ENCODE measurements at regions of chr5 and their contacts with region 1.

Region 1: DNA sequence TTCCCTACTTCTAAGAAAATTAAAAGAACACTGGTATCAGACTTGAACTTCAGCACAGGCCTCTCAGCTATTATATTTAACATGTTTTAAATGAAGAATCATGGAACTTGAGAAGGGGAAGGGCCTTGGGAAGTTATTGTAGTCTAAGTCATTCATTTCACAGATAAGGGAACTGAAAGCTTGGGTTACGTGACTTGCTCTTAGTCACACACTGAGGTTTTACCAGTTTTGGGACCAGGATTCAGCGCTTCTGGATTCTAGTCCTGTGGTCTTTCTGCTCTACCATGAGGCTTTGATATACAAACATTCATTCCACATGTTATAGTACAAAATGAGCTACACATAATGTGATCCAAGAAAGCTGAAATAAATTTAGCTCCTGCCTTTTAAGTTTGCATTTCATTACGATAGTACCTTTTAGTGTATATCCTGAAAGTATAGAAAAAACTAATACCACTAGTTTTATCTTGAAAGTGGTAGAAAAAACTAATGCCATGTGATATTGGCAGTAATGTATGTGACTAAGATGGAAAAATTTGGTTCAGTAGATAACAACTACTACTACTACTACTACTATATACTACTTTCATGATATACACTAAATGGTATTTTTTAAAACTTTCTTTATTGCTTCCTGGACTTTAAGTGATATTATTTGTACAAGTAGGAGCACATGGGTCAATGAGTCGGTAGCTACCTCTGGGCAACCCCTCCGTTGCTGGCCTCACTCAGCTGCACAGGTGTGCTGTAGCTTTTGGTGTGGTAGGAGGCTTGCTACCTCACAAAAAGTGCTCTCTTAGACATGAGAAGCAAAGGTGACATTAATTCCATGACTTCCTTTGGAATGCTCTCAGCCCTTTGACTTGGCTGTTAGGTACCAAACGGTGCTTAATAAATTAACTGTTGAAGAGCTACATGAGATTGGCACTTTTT is 40.7 kb downstream of the F2RL2 start:
- DNase-seq: no peak
- H3K4me3 Mint-ChIP-seq: no peak overlapping the region
- H3K27ac Mint-ChIP-seq: peak overlapping the region; percentile 69
- H3K4me1 Mint-ChIP-seq: peaks cover 26% of the 10 kb centered on the region
- H3K27me3 Mint-ChIP-seq: no peaks in the 10 kb centered on the region

Region 2: GRCh38 chr5:76269932-76270610 is 312.4 kb before region 1 on chr5:
- intact Hi-C with region 1: loop called (anchors 2 kb)
- DNase-seq: no peak
- H3K4me3 Mint-ChIP-seq: peak overlapping the region; percentile 49
- H3K27ac Mint-ChIP-seq: peak overlapping the region; percentile 81
- H3K4me1 Mint-ChIP-seq: peaks cover 32% of the 10 kb centered on the region
- H3K27me3 Mint-ChIP-seq: no peaks in the 10 kb centered on the region